ENCODE measurements at regions of chr2 and their contacts with region 1.

Region 1: GRCh38 chr2:95076784-95077529 is 44.7 kb downstream of the MRPS5 start:
- DNase-seq: peak; percentile 74
- H3K4me3 ChIP-seq: peak overlapping the region; percentile 58
- H3K27ac ChIP-seq: no peak overlapping the region
- H3K4me1 ChIP-seq: peaks cover 6% of the 10 kb centered on the region
- H3K27me3 ChIP-seq: peaks cover 32% of the 10 kb centered on the region
- CTCF ChIP-seq: peak; percentile 92

Region 2: DNA sequence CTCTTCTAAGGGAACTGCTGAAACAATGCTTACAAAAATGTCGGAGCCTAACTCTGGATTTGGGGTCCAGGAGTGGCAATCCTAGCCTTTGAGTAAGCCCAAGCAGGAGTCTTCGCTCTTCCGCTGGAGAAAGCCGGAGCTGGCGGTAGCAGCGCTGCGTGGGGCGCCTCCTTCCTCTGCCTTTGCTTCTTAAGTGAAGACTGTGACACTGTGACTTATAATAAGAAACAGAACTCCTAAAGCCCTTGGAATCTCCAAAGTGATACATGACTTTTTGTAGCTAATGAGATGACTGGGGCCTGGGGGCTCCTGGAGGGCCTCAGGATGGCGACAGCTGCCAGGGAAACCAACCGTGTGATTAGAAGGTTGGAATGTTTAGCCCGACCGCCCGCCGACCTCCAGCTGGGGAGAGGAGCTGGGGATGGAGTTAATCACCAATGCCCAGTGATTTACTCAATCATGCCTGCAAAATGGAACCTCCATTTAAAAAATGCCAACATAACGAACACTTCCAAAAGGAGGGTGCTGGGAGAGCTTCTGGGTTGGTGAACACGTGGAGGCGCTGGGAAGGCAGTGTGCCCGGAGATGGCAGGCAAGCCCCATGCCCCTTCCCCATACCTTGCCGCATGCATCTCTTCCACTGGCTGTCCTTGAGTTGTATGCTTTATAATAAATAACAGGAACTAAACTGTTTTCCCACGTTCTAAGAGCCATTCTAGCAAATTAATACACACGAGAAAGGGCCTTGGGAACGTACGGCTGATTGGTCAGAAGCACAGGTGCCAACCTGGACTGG is 80.5 kb before region 1 on chr2:
- CTCF ChIA-PET with region 1: interaction called, 10 read pairs
- POLR2A ChIA-PET with region 1: interaction called, 3 read pairs
- intact Hi-C with region 1: no loop called
- DNase-seq: peak; percentile 56
- H3K4me3 ChIP-seq: no peak overlapping the region
- H3K27ac ChIP-seq: no peak overlapping the region
- H3K4me1 ChIP-seq: peaks cover 16% of the 10 kb centered on the region
- H3K27me3 ChIP-seq: no peaks in the 10 kb centered on the region
- CTCF ChIP-seq: no peak

Region 3: GRCh38 chr2:95022309-95023221 is 54.4 kb before region 1 on chr2:
- CTCF ChIA-PET with region 1: interaction called, 17 read pairs
- POLR2A ChIA-PET with region 1: no interaction called
- intact Hi-C with region 1: loop called (anchors 5 kb)
- DNase-seq: peak; percentile 81
- H3K4me3 ChIP-seq: no peak overlapping the region
- H3K27ac ChIP-seq: no peak overlapping the region
- H3K4me1 ChIP-seq: peaks cover 6% of the 10 kb centered on the region
- H3K27me3 ChIP-seq: peaks cover 50% of the 10 kb centered on the region
- CTCF ChIP-seq: peak; percentile 93